Natural killer cell (primary cell): ENCODE measurements at regions of chr11 and their contacts with region 1.

Region 1: DNA sequence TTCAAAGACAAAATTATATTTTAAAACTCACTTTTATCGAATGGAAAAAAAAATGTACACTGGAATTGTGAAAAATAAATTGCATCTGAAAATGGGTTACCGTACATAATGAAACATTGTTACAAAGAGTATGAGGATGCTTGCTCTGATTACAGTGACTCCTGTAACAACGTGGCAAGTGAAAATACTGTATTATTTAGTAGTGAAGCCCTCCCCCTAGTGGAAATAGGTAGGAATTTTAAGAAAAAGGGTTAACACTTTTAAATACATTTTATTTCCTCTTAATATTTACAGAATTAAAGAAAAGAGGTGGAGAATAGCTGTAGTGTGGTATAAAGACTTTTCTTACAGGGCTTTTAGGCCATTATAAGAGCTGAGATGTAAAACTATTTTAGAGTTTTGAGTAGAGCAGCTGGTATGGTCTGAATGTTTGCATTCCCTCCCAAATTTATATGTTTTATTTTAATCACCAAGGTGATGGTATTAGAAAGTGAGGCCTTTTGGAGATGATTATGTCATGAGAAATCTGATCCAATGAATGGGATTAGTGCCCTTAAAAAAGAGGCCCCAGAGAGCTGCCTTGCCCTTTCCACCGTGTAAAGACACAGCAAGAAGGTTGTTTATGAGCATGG is 25.2 kb downstream of the FAM76B start:
- DNase-seq: peak in 1 of 2 donors; percentile 76
- ATAC-seq: peak; percentile 74 to 90 (median 77)
- H3K4me3 ChIP-seq: no peak overlapping the region
- H3K4me3 Mint-ChIP-seq: no peak overlapping the region
- H3K27ac ChIP-seq: no peak overlapping the region
- H3K27ac Mint-ChIP-seq: no peak overlapping the region
- H3K4me1 ChIP-seq: no peaks in the 10 kb centered on the region
- H3K4me1 Mint-ChIP-seq: no peaks in the 10 kb centered on the region
- H3K27me3 ChIP-seq: no peaks in the 10 kb centered on the region
- H3K27me3 Mint-ChIP-seq: peaks cover 8 to 30% of the 10 kb centered on the region in 2 donors
- CTCF ChIP-seq: peak; percentile 80

Region 2: DNA sequence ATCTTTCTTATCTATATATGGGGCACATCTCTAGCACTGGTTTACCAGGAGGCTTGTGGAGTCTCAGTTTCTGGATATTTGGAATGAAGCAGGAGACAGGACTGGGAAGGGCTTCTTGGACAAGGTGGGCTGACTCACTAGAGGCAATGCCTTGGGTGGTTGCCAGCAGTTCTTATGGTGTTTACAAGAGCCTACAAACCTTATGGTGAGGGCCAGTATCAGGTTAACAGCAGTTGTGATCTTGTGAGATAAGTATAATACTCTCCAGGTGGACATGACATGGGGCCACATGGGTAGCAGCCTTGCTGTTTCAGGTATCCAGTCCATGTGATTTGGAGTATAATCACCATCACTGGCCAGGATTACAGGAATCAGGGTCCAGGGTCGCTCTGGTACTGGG is 1210.4 kb before region 1 on chr11:
- intact Hi-C with region 1: no loop called
- DNase-seq: no peak
- ATAC-seq: no peak
- H3K4me3 ChIP-seq: no peak overlapping the region
- H3K4me3 Mint-ChIP-seq: no peak overlapping the region
- H3K27ac ChIP-seq: no peak overlapping the region
- H3K27ac Mint-ChIP-seq: no peak overlapping the region
- H3K4me1 ChIP-seq: no peaks in the 10 kb centered on the region
- H3K4me1 Mint-ChIP-seq: peaks cover 10 to 19% of the 10 kb centered on the region in 2 donors
- H3K27me3 ChIP-seq: no peaks in the 10 kb centered on the region
- H3K27me3 Mint-ChIP-seq: no peaks in the 10 kb centered on the region
- CTCF ChIP-seq: no peak

Region 3: DNA sequence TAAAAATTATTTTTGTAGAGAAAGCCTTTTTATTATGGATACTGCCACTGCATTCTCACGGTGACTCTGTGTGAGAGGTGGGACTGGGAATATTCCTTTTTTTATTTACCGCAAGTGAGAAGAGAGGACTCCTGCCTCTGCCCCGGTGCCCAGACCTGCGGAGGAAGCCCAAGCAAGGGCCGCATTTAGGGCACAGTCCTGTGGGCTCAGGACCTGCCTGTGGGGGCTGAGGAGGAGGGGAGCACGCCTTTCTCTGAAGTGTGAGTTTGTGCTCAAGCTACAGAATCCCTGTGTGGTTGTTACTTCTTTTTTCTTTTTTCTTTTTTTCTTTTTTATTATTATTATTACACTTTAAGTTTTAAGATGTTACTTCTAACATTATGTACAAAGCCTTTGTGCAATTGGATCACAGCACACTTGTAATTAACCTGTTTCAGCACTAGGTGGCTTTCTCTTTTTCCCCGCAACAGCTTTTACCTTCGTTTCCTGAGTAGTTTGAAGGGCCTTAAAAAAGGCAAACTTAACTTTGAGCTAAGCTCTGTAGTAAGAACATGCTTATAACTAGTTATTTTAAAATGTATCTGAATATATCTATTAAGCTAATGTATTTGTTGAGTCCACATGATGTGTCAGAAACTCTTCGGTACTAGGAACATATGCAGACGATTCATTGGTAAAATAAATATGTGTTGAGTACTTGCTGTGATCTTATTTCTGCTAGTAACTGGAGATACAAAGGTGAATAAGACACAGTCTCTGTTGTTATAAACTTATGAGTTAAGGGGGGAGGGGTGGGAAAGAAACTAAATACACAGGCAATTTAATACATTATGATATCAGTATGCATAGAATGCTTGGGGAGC is 977.9 kb before region 1 on chr11:
- intact Hi-C with region 1: loop called (anchors 5 kb)
- DNase-seq: peak in 1 of 2 donors; percentile 56
- ATAC-seq: peak in 2 of 3 donors; percentile 69 to 70
- H3K4me3 ChIP-seq: no peak overlapping the region
- H3K4me3 Mint-ChIP-seq: no peak overlapping the region
- H3K27ac ChIP-seq: no peak overlapping the region
- H3K27ac Mint-ChIP-seq: no peak overlapping the region
- H3K4me1 ChIP-seq: no peaks in the 10 kb centered on the region
- H3K4me1 Mint-ChIP-seq: peaks cover 0 to 5% of the 10 kb centered on the region in 2 donors
- H3K27me3 ChIP-seq: no peaks in the 10 kb centered on the region
- H3K27me3 Mint-ChIP-seq: no peaks in the 10 kb centered on the region
- CTCF ChIP-seq: peak; percentile 72

Region 4: GRCh38 chr11:96781082-96781481 is 1016.7 kb after region 1 on chr11:
- intact Hi-C with region 1: no loop called
- DNase-seq: no peak
- ATAC-seq: no peak
- H3K4me3 ChIP-seq: no peak overlapping the region
- H3K4me3 Mint-ChIP-seq: no peak overlapping the region
- H3K27ac ChIP-seq: no peak overlapping the region
- H3K27ac Mint-ChIP-seq: no peak overlapping the region
- H3K4me1 ChIP-seq: no peaks in the 10 kb centered on the region
- H3K4me1 Mint-ChIP-seq: no peaks in the 10 kb centered on the region
- H3K27me3 ChIP-seq: no peaks in the 10 kb centered on the region
- H3K27me3 Mint-ChIP-seq: no peaks in the 10 kb centered on the region
- CTCF ChIP-seq: no peak